CD8-positive, alpha-beta T cell (primary cell): ENCODE measurements at regions of chr9 and their contacts with region 1.

Region 1: DNA sequence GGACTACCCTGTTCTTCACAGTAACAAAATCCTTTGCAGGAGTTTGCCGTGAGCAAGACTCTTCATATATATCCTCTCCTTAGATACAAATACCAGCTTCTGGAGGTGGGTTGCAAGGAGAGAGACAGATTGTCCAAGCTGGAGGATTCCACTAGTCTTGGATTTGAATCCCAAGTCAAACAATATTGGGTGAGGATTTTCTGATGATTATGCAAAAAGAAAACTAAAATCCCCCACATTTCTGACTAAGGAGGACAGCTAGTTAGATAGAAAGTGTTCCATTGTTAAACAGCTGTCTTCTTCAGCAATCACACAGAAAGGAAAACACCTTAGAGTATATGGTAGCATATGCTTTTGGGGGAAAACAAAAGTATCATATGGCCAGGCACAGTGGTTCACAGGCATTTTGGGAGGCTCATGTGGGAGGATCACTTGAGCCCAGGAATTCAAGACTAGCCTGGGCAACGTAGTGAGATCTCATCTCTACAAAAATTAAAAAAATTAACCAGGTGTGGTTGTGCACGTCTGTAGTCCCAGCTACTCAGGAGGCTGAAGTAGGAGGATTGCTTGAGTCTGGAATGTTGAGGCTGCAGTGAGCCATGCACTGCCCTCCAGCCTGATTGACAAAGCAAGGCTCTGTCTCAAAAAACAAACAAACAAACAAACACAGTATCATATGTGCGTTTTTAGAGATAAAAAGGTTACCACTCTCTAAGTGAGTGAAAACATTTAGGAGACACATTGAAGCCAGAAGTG is 54.0 kb downstream of the KLF4 start:
- DNase-seq: no peak
- ATAC-seq: no peak
- H3K4me3 ChIP-seq: no peak overlapping the region
- H3K4me3 Mint-ChIP-seq: no peak overlapping the region
- H3K27ac ChIP-seq: no peak overlapping the region
- H3K27ac Mint-ChIP-seq: no peak overlapping the region
- H3K4me1 ChIP-seq: no peaks in the 10 kb centered on the region
- H3K4me1 Mint-ChIP-seq: no peaks in the 10 kb centered on the region
- H3K27me3 ChIP-seq: no peaks in the 10 kb centered on the region
- H3K27me3 Mint-ChIP-seq: peaks cover 17% of the 10 kb centered on the region
- CTCF ChIP-seq: no peak

Region 2: GRCh38 chr9:107425101-107426045 is 10.2 kb before region 1 on chr9:
- CTCF ChIA-PET with region 1: interaction called, 10 read pairs
- POLR2A ChIA-PET with region 1: no interaction called
- intact Hi-C with region 1: no loop called
- DNase-seq: peak in 8 of 9 experiments; percentile 6 to 59 (median 34)
- ATAC-seq: peak; percentile 34
- H3K4me3 ChIP-seq: peak overlapping the region; percentile 27 to 46
- H3K4me3 Mint-ChIP-seq: peak overlapping the region; percentile 37
- H3K27ac ChIP-seq: no peak overlapping the region
- H3K27ac Mint-ChIP-seq: no peak overlapping the region
- H3K4me1 ChIP-seq: no peaks in the 10 kb centered on the region
- H3K4me1 Mint-ChIP-seq: peaks cover 5% of the 10 kb centered on the region
- H3K27me3 ChIP-seq: no peaks in the 10 kb centered on the region
- H3K27me3 Mint-ChIP-seq: peaks cover 22% of the 10 kb centered on the region
- CTCF ChIP-seq: peak; percentile 86

Region 3: GRCh38 chr9:107942872-107943271 is 507.3 kb after region 1 on chr9:
- CTCF ChIA-PET with region 1: no interaction called
- POLR2A ChIA-PET with region 1: no interaction called
- intact Hi-C with region 1: no loop called
- DNase-seq: no peak
- ATAC-seq: no peak
- H3K4me3 ChIP-seq: no peak overlapping the region
- H3K4me3 Mint-ChIP-seq: no peak overlapping the region
- H3K27ac ChIP-seq: no peak overlapping the region
- H3K27ac Mint-ChIP-seq: no peak overlapping the region
- H3K4me1 ChIP-seq: no peaks in the 10 kb centered on the region
- H3K4me1 Mint-ChIP-seq: no peaks in the 10 kb centered on the region
- H3K27me3 ChIP-seq: no peaks in the 10 kb centered on the region
- H3K27me3 Mint-ChIP-seq: no peaks in the 10 kb centered on the region
- CTCF ChIP-seq: no peak